Activated CD4-positive, alpha-beta T cell treated with anti-CD3 and anti-CD28 coated beads for 36 hours (primary cell): ENCODE measurements at regions of chr14 and their contacts with region 1.

Region 1: GRCh38 chr14:89954070-89955028 is at the start of gene EFCAB11:
- DNase-seq: peak; percentile 97
- ATAC-seq: peak; percentile 86
- H3K4me3 Mint-ChIP-seq: peak within 1 kb of the TSS; percentile 94
- H3K27ac Mint-ChIP-seq: peak within 1 kb of the TSS; percentile 91
- H3K4me1 Mint-ChIP-seq: peaks cover 32% of the 10 kb centered on the region
- H3K27me3 Mint-ChIP-seq: no peaks in the 10 kb centered on the region
- total RNA-seq, gene EFCAB11: 4.8 to 6.3 TPM

Region 2: DNA sequence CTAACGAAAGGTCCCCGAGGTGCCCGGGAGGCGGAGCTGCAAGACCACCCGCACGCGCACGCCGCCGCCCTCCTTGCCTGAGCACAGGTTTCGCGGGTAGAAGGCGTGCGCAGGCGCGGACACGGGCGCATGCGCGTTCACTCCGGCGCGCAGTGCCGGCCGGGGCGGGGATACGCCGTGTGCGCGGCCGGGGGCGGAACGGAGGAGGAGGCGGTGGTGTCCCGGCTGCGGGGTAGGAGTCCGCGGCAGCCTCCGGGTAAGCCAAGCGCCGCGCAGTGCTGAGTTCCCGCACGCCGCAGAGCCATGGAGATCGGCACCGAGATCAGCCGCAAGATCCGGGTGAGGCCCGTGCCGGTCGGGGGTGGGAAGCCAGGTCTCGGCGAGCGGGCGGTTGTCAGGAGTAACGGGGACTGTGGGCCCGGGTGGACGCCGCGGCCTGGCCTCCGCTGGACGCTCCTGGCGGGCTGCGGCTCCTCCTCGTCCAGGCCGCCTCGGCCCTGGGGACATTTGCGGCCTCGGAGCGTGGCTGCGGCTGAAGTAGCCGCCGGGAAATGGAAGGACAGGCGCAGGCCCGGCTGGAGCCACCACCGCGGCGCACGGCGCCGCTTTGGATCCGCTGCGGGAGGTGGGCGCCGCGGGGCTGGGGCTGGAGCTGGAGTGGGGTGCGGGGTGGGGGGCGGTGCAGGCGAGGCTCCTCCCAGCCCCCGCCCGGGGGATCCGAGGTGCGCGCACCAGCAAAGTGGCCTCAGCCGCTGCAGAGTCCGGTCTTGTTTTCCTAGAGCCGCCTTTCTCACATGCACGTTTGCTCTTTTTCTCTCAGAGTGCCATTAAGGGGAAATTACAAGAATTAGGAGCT is 1391.3 kb before region 1 on chr14 and contains the start of gene ZC3H14:
- CTCF ChIA-PET with region 1: no interaction called
- POLR2A ChIA-PET with region 1: no interaction called
- intact Hi-C with region 1: loop called in 1 of 2 experiments (anchors 1 kb)
- DNase-seq: peak; percentile 91
- ATAC-seq: peak; percentile 94
- H3K4me3 Mint-ChIP-seq: peak within 1 kb of the TSS; percentile 83
- H3K27ac Mint-ChIP-seq: peak within 1 kb of the TSS; percentile 92
- H3K4me1 Mint-ChIP-seq: peaks cover 31% of the 10 kb centered on the region
- H3K27me3 Mint-ChIP-seq: peaks cover 12% of the 10 kb centered on the region
- total RNA-seq, gene ZC3H14: 46.9 to 63.6 TPM

Region 3: DNA sequence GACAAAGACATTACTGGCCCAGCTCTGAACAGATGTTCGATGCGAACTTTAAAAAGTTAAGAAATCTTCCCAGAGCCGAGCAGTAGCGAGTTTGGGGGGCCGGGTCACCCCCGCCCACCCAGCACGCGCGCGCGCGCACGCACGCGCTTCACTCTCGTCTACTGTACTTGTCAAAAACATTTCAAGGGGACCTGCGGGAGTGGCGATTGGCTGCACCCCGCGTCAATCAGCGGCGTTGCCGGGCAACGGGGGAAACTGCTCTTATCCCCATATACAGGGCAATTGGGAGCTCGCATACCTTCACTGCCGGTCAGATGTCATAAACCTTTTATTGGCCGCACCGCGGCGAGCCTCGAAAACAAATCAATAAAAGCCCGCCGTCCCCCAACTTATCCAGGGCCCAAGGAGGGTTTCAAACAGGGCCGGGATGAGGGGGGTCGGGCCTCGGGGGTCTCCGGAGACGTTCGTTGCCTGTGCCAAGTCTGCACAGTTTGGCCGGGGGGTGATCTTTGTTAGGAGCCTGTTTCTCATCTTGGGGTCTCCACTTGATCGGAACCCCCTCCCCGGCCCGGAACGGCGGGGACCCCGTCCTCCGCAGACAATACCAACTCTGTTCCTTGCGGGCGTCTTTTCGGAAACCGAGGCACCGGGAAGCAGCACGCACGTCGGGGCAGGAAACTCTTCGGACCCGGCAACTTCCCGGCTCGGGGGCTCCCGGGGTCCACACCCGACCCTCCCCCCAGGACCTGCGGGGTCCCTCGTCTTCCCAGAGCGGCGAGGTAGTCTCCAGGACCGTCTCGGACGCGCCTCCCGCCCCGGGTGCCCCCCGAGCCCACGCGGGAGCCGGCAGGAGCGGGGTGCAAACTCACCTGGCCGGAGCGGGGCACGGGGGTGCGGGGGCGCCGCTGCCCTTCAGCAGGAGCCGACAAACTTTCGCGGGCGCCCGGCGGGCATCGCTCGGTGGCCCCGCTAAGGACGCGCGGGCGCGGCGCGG is 538.0 kb before region 1 on chr14:
- CTCF ChIA-PET with region 1: no interaction called
- POLR2A ChIA-PET with region 1: no interaction called
- intact Hi-C with region 1: loop called (anchors 1 to 10 kb)
- DNase-seq: peak; percentile 98
- ATAC-seq: peak; percentile 80
- H3K4me3 Mint-ChIP-seq: peak overlapping the region; percentile 84
- H3K27ac Mint-ChIP-seq: peak overlapping the region; percentile 85
- H3K4me1 Mint-ChIP-seq: peaks cover 51% of the 10 kb centered on the region
- H3K27me3 Mint-ChIP-seq: no peaks in the 10 kb centered on the region

Region 4: GRCh38 chr14:89936658-89937185 is 17.6 kb before region 1 on chr14:
- CTCF ChIA-PET with region 1: interaction called, 31 read pairs
- POLR2A ChIA-PET with region 1: no interaction called
- intact Hi-C with region 1: no loop called
- DNase-seq: no peak
- ATAC-seq: no peak
- H3K4me3 Mint-ChIP-seq: no peak overlapping the region
- H3K27ac Mint-ChIP-seq: no peak overlapping the region
- H3K4me1 Mint-ChIP-seq: peaks cover under 1% of the 10 kb centered on the region
- H3K27me3 Mint-ChIP-seq: no peaks in the 10 kb centered on the region

Region 5: GRCh38 chr14:90060312-90060964 is 106.1 kb after region 1 on chr14:
- CTCF ChIA-PET with region 1: interaction called, 5 read pairs
- POLR2A ChIA-PET with region 1: no interaction called
- intact Hi-C with region 1: loop called (anchors 1 to 5 kb)
- DNase-seq: peak; percentile 77
- ATAC-seq: peak; percentile 86
- H3K4me3 Mint-ChIP-seq: peak overlapping the region; percentile 64
- H3K27ac Mint-ChIP-seq: no peak overlapping the region
- H3K4me1 Mint-ChIP-seq: peaks cover 24% of the 10 kb centered on the region
- H3K27me3 Mint-ChIP-seq: peaks cover 64% of the 10 kb centered on the region

Region 6: DNA sequence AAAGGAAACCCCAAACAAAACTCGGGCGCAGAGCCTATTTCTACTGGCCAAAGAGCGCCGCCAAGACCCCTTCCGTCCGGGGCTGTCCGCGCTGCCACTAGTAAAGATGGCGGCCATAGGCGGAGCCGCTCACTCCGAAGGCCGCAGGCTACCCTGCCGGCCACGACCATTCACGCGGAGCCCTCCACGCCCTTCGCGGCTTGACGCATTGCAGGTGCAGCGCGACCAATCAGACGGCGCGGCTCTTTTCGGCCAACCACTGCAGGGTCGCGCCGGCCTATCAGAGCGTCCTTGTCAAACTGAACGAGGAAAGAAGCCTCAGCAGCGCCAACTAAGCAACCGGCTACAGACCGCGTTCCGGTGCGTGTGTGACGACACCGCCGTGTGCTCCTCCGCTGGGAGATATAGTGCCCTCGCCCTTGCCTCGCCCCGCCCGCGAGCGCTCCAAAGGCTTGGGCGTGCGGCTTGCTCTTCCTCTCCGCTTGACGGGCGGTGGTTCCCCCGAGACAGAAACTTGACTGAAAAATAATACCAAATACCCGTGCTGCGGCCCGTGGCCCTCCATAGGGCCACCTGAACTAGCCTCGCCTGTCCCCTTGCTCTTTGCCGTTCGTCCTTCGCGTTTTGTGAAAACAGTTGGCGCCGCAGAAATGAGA is 428.9 kb after region 1 on chr14:
- CTCF ChIA-PET with region 1: no interaction called
- POLR2A ChIA-PET with region 1: no interaction called
- intact Hi-C with region 1: loop called (anchors 1 to 5 kb)
- DNase-seq: peak; percentile 99
- ATAC-seq: peak; percentile 89
- H3K4me3 Mint-ChIP-seq: no peak overlapping the region
- H3K27ac Mint-ChIP-seq: no peak overlapping the region
- H3K4me1 Mint-ChIP-seq: peaks cover 27% of the 10 kb centered on the region
- H3K27me3 Mint-ChIP-seq: no peaks in the 10 kb centered on the region

Region 7: GRCh38 chr14:90406384-90406798 is 452.0 kb after region 1 on chr14:
- CTCF ChIA-PET with region 1: no interaction called
- POLR2A ChIA-PET with region 1: no interaction called
- intact Hi-C with region 1: no loop called
- DNase-seq: no peak
- ATAC-seq: peak; percentile 17
- H3K4me3 Mint-ChIP-seq: no peak overlapping the region
- H3K27ac Mint-ChIP-seq: peak overlapping the region; percentile 67
- H3K4me1 Mint-ChIP-seq: peaks cover 64% of the 10 kb centered on the region
- H3K27me3 Mint-ChIP-seq: no peaks in the 10 kb centered on the region

Region 8: DNA sequence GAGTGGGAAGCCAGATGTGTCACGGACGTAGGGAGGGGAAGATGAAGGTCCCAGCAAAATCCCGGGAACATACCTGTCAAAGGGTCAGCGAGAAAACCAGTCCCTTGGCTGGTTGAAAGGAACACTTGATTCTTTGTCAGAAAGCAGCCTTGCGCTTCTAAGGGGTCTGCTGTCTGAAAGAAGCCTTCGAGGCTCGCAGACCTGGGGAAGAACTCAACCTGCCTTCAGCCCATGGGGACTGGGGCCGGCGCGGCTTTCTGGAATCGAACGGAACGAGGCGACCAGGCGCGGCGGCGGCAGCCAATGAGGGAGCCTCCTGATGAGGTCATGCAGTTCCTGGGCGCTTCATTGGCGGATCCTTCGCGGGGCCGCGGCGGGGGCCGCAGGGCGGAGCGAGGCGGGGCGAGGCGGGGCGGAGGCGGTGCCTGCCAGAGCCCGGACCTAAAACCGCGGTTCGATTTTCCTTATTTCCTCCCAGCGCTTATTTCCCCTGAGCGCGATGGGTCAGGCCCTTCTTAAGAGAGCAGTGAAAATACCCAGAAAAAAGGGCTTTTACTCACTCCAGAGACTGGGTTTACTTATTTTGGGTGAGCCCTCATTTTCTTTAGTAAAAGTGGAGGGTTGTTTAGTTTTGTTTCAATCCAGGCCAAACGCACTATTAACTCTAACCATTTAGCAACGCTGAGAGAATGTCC is 873.7 kb after region 1 on chr14:
- CTCF ChIA-PET with region 1: no interaction called
- POLR2A ChIA-PET with region 1: no interaction called
- intact Hi-C with region 1: loop called in 1 of 2 experiments (anchors 10 kb)
- DNase-seq: peak; percentile 95
- ATAC-seq: peak; percentile 99
- H3K4me3 Mint-ChIP-seq: peak overlapping the region; percentile 68
- H3K27ac Mint-ChIP-seq: peak overlapping the region; percentile 88
- H3K4me1 Mint-ChIP-seq: peaks cover 20% of the 10 kb centered on the region
- H3K27me3 Mint-ChIP-seq: no peaks in the 10 kb centered on the region